Heart right ventricle (tissue), 16 donors: ENCODE measurements at regions of chr14 and their contacts with region 1.

Region 1: GRCh38 chr14:34227834-34228649 is 234.0 kb downstream of the SPTSSA start:
- DNase-seq: peak; percentile 53 to 73
- ATAC-seq: peak; percentile 91 to 96 (median 94)
- H3K4me3 ChIP-seq: peak overlapping the region in 6 of 10 donors; percentile 12 to 42 (median 34)
- H3K27ac ChIP-seq: no peak overlapping the region
- H3K4me1 ChIP-seq: peaks cover 0 to 30% (median 6%) of the 10 kb centered on the region in 9 donors
- H3K27me3 ChIP-seq: no peaks in the 10 kb centered on the region
- CTCF ChIP-seq: peak; percentile 62 to 95 (median 85)

Region 2: DNA sequence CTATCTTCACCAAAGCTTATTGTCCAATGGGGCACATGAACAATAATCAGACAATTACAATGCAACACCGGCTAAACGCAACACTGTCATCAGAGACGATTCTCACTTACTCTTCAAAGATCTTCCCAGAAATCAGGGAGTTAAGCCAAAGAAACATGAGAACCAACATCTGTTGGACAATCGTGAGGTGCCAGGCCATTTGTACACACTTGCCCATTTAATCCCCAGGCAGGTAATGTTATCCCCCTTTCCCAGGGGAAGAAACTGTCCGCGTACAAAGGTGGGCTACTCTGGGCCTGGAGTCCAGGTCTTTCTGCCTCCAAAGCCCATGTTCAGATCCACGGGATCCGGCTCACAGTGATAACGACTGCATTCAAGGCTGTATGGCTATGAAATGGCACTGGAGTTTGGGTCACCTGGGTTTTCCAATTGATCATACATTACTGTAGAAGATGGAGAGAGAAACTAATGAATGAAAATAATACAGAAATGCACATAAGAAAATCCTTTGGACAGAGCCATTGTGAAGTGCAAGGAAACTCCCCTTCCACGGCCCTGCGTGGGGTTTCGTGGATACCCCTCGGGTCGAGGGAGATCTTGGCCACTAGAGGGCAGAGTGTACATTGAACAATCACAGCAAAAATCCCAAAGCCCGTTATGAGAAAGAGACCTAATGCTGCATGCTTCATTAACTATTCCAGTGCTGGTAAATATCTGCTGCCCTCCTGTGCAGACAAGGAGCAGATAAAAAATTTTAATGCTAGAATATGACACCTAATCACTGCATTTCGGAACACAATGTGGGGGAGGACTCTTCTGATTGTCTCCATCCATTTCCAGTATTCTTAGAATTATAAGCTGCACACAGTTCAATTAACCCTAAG is 388.6 kb before region 1 on chr14:
- intact Hi-C with region 1: loop called (anchors 1 to 10 kb)
- DNase-seq: peak; percentile 25 to 67
- ATAC-seq: peak; percentile 69 to 84 (median 78)
- H3K4me3 ChIP-seq: no peak overlapping the region
- H3K27ac ChIP-seq: no peak overlapping the region
- H3K4me1 ChIP-seq: peaks cover 0 to 16% (median 4%) of the 10 kb centered on the region in 9 donors
- H3K27me3 ChIP-seq: no peaks in the 10 kb centered on the region
- CTCF ChIP-seq: peak; percentile 76 to 94 (median 88)

Region 3: GRCh38 chr14:33848706-33849454 is 379.2 kb before region 1 on chr14:
- intact Hi-C with region 1: loop called in 3 of 10 experiments (anchors 1 to 10 kb)
- DNase-seq: peak; percentile 51 to 71
- ATAC-seq: peak; percentile 78 to 95 (median 92)
- H3K4me3 ChIP-seq: no peak overlapping the region
- H3K27ac ChIP-seq: no peak overlapping the region
- H3K4me1 ChIP-seq: peaks cover 0 to 11% (median 3%) of the 10 kb centered on the region in 9 donors
- H3K27me3 ChIP-seq: no peaks in the 10 kb centered on the region
- CTCF ChIP-seq: peak; percentile 56 to 81 (median 75)

Region 4: DNA sequence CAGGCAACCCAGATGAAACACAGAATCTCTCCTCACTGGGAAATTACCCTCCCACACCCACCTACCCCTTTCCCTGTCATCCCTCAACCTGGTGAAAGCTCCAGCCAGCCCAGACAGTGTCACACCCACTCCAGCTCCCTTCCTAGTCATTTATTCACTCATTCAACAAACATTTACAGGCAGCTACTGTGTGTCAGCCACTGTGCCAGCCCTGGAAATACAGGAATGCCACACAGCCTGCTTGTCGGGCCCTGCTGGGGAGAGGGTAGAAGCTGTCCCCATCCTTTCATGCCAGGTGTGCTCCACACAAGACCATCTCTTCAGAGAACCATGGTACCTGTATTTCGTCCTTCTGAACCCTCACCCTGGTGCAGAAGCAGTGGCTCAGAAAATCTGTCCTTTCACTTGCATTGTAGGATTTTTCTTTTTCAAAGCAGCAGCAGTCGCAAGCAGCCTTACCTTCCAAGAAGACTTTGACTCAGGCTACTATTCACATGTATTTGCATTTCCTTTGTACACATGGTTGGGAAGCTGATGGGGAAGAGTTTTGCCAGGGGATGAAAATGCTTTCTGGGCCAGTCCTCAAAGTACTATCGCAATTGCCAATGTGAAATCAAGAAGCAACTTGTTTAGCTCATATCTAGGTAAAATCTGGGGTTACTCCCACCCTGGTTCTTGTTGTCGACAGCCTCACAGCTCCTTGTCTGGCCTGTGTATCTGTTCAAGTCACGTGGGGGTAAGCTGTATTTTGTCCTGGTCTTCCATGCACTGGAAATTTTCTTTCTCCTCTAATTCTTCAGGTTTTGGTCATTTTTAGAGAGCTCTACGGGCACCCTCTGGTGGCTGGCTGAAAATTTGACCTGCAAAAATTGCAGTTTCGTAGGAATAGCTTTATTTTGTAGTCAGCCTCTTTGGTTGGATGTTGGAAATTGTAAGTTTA is 129.7 kb before region 1 on chr14:
- intact Hi-C with region 1: loop called in 6 of 10 experiments (anchors 2 to 10 kb)
- DNase-seq: peak in 1 of 2 donors; percentile 24
- ATAC-seq: peak in 7 of 8 donors; percentile 34 to 77 (median 59)
- H3K4me3 ChIP-seq: no peak overlapping the region
- H3K27ac ChIP-seq: peak overlapping the region in 2 of 10 donors; percentile 18 to 20
- H3K4me1 ChIP-seq: peaks cover 0 to 25% (median 8%) of the 10 kb centered on the region in 9 donors
- H3K27me3 ChIP-seq: no peaks in the 10 kb centered on the region
- CTCF ChIP-seq: peak in 8 of 9 donors; percentile 46 to 78 (median 70)

Region 5: GRCh38 chr14:34136996-34137745 is 90.9 kb before region 1 on chr14:
- intact Hi-C with region 1: loop called in 1 of 10 experiments (anchors 10 kb)
- DNase-seq: no peak
- ATAC-seq: no peak
- H3K4me3 ChIP-seq: no peak overlapping the region
- H3K27ac ChIP-seq: no peak overlapping the region
- H3K4me1 ChIP-seq: peaks cover 0 to 13% (median 5%) of the 10 kb centered on the region in 9 donors
- H3K27me3 ChIP-seq: no peaks in the 10 kb centered on the region
- CTCF ChIP-seq: no peak

Region 6: GRCh38 chr14:34180460-34180868 is 47.6 kb before region 1 on chr14:
- intact Hi-C with region 1: no loop called
- DNase-seq: no peak
- ATAC-seq: peak in 2 of 8 donors; percentile 28 to 69
- H3K4me3 ChIP-seq: no peak overlapping the region
- H3K27ac ChIP-seq: peak overlapping the region in 2 of 10 donors; percentile 13 to 44
- H3K4me1 ChIP-seq: peaks cover 0 to 42% (median 19%) of the 10 kb centered on the region in 9 donors
- H3K27me3 ChIP-seq: no peaks in the 10 kb centered on the region
- CTCF ChIP-seq: no peak

Region 7: DNA sequence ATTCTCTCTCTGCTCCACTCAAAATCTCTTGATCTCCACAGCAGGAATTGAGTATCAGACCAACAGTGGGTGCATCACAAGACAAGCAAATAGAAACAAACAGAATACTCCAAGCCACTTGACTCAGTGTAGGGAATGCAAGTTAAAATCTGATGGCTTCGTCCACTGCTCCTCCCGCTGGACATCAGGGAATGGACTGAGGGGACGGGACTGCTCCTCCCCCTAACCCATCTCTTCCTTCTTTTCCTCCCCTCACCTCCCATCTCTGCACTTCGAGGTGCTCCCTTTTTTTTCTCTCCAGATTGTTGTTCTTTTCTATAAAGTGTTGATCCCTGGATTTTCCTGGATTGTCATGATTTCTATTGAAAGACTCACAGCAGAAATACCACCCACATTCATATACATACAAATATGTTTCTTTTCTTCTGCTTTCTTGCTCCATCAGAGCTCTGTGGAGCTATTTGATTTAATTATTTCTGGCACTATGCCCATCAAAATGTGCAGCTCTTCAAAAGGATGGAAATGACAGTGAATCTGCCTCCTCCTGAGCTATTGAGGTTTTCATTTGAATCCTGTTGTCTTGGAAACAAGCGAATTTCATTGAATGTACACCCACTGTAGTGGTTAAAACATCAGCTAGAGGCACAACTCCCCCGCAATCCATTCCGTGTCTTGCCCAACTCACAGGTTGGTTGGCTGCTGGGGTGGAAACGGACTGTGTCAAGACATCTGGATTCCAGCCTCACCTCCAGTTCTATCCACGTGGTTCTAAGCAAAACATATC is 34.3 kb after region 1 on chr14:
- intact Hi-C with region 1: no loop called
- DNase-seq: no peak
- ATAC-seq: no peak
- H3K4me3 ChIP-seq: no peak overlapping the region
- H3K27ac ChIP-seq: no peak overlapping the region
- H3K4me1 ChIP-seq: no peaks in the 10 kb centered on the region
- H3K27me3 ChIP-seq: no peaks in the 10 kb centered on the region
- CTCF ChIP-seq: no peak

Region 8: DNA sequence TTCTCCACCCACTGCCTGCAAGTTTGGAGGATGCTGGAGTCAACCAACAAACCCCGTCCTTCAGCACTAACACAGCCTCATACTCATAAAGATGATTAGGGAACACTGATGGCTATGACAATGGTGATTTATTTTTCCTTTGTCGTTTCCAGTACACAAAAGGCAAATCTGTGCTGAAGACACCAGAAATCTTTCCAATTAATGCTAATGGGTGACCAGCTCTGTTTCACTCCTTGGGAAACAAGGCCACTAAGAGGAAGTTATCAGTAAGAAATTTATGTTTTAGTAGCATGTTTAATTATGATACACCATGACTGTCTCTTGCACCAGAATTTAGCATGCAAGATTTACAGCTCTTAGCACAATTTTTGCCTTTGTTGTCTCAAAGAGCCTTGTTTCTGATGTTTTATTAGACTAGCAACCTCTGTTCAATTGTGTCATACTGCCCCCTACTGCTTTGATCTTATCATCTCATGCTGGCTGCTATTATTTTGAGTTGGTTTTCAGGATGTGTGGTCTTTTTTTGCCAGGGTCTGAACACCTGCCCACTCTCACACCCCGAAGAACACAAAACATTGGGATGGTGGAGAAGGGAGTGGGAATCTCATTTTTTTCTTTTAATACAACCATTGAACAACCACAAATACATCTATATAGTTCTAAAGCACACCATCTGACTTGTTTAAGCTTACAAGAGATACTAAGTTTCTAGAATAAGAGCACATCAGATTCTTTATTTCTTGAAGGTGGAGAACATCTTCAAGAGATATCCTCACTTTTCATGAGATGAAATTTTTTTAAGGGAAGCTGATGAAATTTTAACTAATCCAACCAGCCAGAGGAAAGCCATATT is 73.1 kb after region 1 on chr14:
- intact Hi-C with region 1: loop called in 2 of 10 experiments (anchors 5 kb)
- DNase-seq: no peak
- ATAC-seq: peak in 3 of 8 donors; percentile 33 to 61 (median 53)
- H3K4me3 ChIP-seq: no peak overlapping the region
- H3K27ac ChIP-seq: no peak overlapping the region
- H3K4me1 ChIP-seq: peaks cover 0 to 11% (median 0%) of the 10 kb centered on the region in 9 donors
- H3K27me3 ChIP-seq: no peaks in the 10 kb centered on the region
- CTCF ChIP-seq: peak; percentile 39 to 76 (median 66)

Region 9: DNA sequence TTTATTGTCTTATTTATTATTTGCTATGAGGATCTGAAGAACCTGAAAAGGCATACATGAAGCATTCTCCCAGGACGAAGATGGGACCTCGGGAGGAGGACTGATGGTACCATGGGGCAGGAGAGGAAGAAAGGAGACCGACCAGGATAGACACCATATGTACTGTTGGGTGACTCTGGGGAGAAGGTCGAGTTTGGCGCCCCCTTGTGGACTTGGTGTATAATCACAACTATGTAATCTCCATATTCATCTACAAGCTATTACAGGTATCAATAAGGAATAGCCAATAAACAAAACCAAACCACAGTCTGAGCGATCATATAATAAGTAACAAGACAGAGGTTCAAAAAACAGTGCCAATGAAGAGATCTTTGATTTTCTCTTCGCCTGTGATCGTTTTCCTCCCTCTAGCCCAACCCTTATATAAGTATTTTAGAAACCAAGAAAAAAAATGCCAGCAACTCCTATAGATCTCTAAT is 94.9 kb after region 1 on chr14:
- intact Hi-C with region 1: loop called in 1 of 10 experiments (anchors 5 kb)
- DNase-seq: peak; percentile 51
- ATAC-seq: peak in 7 of 8 donors; percentile 51 to 71 (median 68)
- H3K4me3 ChIP-seq: no peak overlapping the region
- H3K27ac ChIP-seq: no peak overlapping the region
- H3K4me1 ChIP-seq: peaks cover 0 to 12% (median 0%) of the 10 kb centered on the region in 9 donors
- H3K27me3 ChIP-seq: no peaks in the 10 kb centered on the region
- CTCF ChIP-seq: peak; percentile 54 to 79 (median 75)

Region 10: DNA sequence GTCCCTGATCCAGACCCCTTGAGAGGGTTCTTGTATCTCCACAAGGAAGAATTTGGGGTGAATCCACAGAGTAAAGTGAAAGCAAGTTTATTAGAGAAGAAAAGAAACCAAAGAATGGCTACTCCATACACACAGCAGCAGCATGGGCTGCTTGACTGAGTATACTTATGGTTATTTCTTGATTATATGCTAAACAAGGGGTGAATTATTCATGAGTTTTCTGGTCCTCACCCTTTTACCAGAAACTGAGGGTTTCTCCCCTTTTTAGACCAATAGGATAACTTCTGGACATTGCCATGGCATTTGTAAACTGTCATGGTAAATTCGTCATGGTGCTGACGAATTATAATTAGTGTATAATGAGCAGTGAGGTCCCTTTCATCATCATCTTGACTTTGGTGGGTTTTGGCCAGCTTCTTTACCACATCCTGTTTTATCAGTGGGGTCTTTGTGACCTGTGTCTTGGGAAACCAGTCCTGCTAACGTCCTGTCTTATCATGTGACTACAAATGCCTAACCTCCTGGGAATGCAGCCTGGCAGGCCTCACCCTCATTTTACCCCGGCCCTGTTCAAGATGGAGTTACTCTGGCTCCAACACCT is 112.1 kb after region 1 on chr14:
- intact Hi-C with region 1: no loop called
- DNase-seq: no peak
- ATAC-seq: no peak
- H3K4me3 ChIP-seq: no peak overlapping the region
- H3K27ac ChIP-seq: no peak overlapping the region
- H3K4me1 ChIP-seq: no peaks in the 10 kb centered on the region
- H3K27me3 ChIP-seq: no peaks in the 10 kb centered on the region
- CTCF ChIP-seq: no peak